Activated T-helper 1 cell treated with anti-CD3 and anti-CD28 coated beads, Interleukin-12 subunit alpha, Interleukin-12 subunit beta, Interleukin-2, Interleukin-4 antibody, amounts not matched to agents 30 ng/mL and 10 ng/mL and 1 ng/mL, durations not matched to agents 14 hours and 24 hours and 36 hours (primary cell): ENCODE measurements at regions of chrX and their contacts with region 1.

Region 1: DNA sequence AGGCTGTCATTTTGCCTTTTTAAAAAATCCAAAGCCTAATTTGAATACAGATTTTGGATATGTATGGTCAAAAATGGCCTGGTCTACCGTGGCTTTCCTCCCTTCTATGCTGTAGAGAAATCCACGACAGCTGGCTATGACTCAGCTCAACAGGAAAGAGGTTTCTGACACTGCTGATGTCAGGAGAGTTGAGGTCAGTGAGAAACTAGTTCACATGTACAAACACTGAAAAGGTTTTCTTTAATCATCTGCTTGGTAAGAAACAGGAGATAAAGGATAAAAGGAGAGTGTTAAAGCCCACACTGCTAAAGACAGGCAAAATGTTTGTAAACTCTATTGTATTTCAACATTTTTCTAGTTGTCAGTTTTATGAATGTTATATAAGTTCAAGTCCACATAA is 113.9 kb downstream of the NYX start:
- DNase-seq: peak; percentile 25
- H3K4me3 Mint-ChIP-seq: peak overlapping the region; percentile 56
- H3K27ac Mint-ChIP-seq: peak overlapping the region; percentile 80
- H3K4me1 Mint-ChIP-seq: peaks cover 57% of the 10 kb centered on the region
- H3K27me3 Mint-ChIP-seq: no peaks in the 10 kb centered on the region

Region 2: DNA sequence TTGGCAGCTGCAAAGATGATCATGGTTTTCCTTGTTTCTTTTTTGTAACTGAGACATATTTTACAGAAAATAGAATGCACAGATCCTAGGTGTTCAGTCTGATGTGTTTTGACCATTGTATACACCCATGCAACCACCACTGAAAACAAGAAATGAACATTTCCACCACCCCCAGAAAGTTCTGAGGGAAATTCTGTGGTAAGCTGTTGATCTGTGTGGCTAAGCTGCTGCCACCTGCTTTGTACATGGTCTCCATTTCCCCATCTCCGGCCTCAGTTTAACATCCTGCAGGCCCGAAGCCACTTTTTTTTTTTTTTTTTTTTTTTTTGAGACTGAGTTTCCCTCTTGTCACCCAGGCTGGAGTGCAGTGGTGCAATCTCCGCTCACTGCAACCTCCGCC is 48.7 kb before region 1 on chrX:
- intact Hi-C with region 1: loop called (anchors 1 kb)
- DNase-seq: peak; percentile 32
- H3K4me3 Mint-ChIP-seq: peak overlapping the region; percentile 16
- H3K27ac Mint-ChIP-seq: peak overlapping the region; percentile 88
- H3K4me1 Mint-ChIP-seq: peaks cover 40% of the 10 kb centered on the region
- H3K27me3 Mint-ChIP-seq: no peaks in the 10 kb centered on the region

Region 3: DNA sequence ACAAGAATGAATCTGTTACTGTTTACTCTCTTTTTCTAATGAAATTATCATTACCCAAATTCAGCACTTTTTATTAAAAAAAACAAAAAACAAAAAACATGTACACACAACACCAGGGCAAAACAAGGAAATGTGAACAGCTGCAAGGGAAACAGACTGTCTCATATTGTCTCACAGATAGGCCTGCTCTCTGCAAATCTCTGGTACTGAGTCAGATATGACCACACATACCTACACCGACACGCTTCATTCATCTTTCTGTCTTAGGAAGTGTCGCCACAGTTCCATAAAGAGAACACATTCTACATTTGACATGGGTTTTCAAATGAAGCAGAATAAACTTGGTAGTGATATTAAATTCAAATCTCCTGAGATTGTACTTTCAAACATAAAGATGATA is 35.6 kb after region 1 on chrX:
- intact Hi-C with region 1: loop called (anchors 5 kb)
- DNase-seq: no peak
- H3K4me3 Mint-ChIP-seq: no peak overlapping the region
- H3K27ac Mint-ChIP-seq: no peak overlapping the region
- H3K4me1 Mint-ChIP-seq: peaks cover 9% of the 10 kb centered on the region
- H3K27me3 Mint-ChIP-seq: no peaks in the 10 kb centered on the region

Region 4: GRCh38 chrX:41759817-41760216 is 198.8 kb after region 1 on chrX:
- intact Hi-C with region 1: loop called (anchors 1 kb)
- DNase-seq: no peak
- H3K4me3 Mint-ChIP-seq: no peak overlapping the region
- H3K27ac Mint-ChIP-seq: no peak overlapping the region
- H3K4me1 Mint-ChIP-seq: peaks cover 10% of the 10 kb centered on the region
- H3K27me3 Mint-ChIP-seq: no peaks in the 10 kb centered on the region

Region 5: GRCh38 chrX:43386875-43387274 is 1825.8 kb after region 1 on chrX:
- intact Hi-C with region 1: no loop called
- DNase-seq: no peak
- H3K4me3 Mint-ChIP-seq: no peak overlapping the region
- H3K27ac Mint-ChIP-seq: no peak overlapping the region
- H3K4me1 Mint-ChIP-seq: no peaks in the 10 kb centered on the region
- H3K27me3 Mint-ChIP-seq: peaks cover 4% of the 10 kb centered on the region

Region 6: DNA sequence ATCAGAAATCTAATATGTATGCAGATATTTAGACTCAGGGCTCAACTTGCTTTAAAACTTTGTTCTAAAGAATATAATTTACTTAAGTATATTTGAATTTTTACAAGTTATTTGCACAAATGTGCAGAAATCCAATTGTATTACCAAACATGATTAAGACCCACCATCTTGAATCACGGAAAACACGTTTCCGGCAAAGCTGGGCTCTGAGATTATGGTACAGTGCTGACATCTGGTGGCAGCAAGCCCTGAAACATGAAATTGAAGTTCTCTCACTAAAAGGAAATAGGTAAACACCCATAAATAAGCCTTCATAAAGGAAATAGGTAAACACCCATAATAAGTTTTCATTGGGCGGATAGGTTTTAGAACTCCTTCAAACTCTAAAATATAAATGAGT is 1996.7 kb after region 1 on chrX:
- intact Hi-C with region 1: loop called (anchors 5 kb)
- DNase-seq: peak; percentile 20
- H3K4me3 Mint-ChIP-seq: no peak overlapping the region
- H3K27ac Mint-ChIP-seq: no peak overlapping the region
- H3K4me1 Mint-ChIP-seq: no peaks in the 10 kb centered on the region
- H3K27me3 Mint-ChIP-seq: peaks cover 4% of the 10 kb centered on the region